ENCODE measurements at regions of chr4 and their contacts with region 1.

Region 1: GRCh38 chr4:56575820-56576429 is 70.3 kb downstream of the ARL9 start:
- DNase-seq: peak; percentile 28 to 29
- ATAC-seq: peak; percentile 50 to 61; a peak in 3 of 6 replicates
- H3K4me3 ChIP-seq: no peak overlapping the region
- H3K27ac ChIP-seq: no peak overlapping the region
- H3K4me1 ChIP-seq: no peaks in the 10 kb centered on the region
- CTCF ChIP-seq: peak; percentile 44
- EP300 ChIP-seq: no peak
- POLR2A ChIP-seq: no peak
- RAD21 ChIP-seq: peak; percentile 47 to 51; a peak in 4 of 5 replicates

Region 2: DNA sequence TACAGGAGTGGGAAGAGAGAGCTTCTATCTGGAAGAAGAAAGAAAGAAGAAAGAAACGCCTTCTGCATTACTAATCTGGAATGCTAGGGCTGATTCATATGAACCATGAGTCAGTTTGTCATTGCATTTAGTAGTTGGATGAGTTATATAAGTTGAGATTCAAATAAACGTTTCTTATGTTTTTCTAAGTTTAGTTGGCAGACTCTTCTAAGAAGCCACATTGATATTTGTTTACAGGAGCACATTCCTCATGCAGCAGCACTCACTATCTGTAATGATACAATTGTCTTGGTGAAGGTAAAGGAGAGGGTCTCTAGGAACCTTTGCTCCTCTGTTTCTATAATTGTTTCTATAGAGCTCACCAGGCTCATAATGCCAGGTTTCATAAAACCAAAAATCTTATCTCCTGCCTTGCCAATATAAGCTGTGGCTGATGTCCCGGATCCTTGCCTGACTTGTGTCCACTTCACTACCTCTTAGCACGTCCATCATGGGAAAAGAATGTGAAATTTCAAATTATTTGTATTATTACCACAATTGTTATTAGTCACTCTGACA is 65.6 kb after region 1 on chr4:
- CTCF ChIA-PET with region 1: interaction called, 7 read pairs
- POLR2A ChIA-PET with region 1: interaction called, 10 read pairs
- DNase-seq: peak; percentile 47 to 55
- ATAC-seq: peak; percentile 89 to 92
- H3K4me3 ChIP-seq: no peak overlapping the region
- H3K27ac ChIP-seq: peak overlapping the region; percentile 40 to 77; a peak in 4 of 6 replicates
- H3K4me1 ChIP-seq: peaks cover 13% of the 10 kb centered on the region
- CTCF ChIP-seq: no peak
- EP300 ChIP-seq: no peak
- POLR2A ChIP-seq: no peak
- RAD21 ChIP-seq: no peak

Region 3: DNA sequence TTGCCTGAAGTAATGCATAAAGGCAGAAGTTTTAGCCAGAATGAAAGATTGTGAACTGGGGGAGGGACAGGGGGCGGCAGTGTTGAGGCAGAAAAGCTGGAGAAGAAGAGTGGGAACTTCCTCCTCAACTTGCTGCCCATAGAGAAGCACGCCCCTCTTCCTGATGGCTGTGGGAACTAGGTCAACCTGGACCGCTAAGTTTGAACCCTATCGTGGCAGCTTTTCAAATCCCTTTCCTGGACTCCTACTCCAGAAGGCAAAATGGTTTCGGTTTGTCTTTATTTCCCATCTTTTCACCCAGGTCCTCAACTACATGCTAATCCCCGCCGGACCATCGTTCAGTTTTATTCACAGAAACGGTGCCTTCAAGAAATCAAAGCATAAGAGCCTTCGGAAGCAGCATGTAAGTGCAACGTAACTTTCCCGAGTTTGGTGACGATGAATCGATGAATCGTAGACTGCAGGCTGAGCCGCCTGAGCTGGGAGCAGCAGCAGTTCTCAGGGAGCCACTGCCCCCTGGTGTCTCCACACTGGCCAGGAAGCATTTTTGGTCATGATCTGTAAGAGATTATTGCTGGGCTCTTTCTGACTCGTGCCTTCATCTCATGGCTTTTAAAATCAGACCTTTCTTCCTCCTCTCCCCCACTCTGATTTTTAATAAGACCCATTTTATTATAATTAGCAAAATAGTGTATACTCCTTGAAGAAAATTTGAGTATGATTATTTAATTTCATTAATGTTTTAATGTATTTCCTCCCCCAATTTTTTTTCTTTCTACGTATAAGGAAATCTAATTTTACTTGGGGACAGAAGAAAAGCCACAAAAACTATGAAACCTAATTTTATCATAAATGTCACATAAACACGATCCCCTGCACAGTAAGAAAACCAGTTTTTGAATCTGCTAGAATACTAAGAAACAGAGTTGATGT is 224.2 kb after region 1 on chr4:
- CTCF ChIA-PET with region 1: interaction called, 17 read pairs
- POLR2A ChIA-PET with region 1: interaction called, 4 read pairs
- DNase-seq: peak; percentile 48 to 77
- ATAC-seq: peak; percentile 99 to 100
- H3K4me3 ChIP-seq: peak overlapping the region; percentile 54
- H3K27ac ChIP-seq: peak overlapping the region; percentile 65 to 82
- H3K4me1 ChIP-seq: no peaks in the 10 kb centered on the region
- CTCF ChIP-seq: peak; percentile 76
- EP300 ChIP-seq: no peak
- POLR2A ChIP-seq: no peak
- RAD21 ChIP-seq: peak; percentile 90 to 94

Region 4: DNA sequence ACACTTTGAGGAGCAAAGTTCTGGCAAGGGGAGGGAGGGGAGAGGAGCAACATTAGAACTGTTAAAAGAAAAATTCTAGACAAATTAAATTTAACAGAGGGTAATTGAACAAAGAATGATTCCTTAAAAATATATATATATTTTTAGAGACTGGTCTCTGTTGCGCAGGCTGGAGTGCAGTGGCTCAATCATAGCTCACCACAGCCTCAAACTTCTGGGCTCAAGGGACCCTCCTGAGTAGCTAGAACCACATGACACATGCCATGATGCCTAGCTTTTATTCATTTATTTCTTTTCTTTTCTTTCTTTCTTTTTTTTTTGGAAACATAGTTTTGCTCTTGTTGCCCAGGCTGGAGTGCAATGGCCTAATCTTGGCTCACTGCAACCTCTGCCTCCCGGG is 264.6 kb after region 1 on chr4:
- CTCF ChIA-PET with region 1: interaction called, 12 read pairs
- POLR2A ChIA-PET with region 1: no interaction called
- DNase-seq: no peak
- ATAC-seq: no peak
- H3K4me3 ChIP-seq: no peak overlapping the region
- H3K27ac ChIP-seq: no peak overlapping the region
- H3K4me1 ChIP-seq: no peaks in the 10 kb centered on the region
- CTCF ChIP-seq: no peak
- EP300 ChIP-seq: no peak
- POLR2A ChIP-seq: no peak
- RAD21 ChIP-seq: no peak